Breast epithelium (tissue), 4 donors: ENCODE measurements at regions of chr12 and their contacts with region 1.

Region 1: GRCh38 chr12:11581179-11581755 is 68.2 kb upstream of the ETV6 start:
- DNase-seq: peak; percentile 37 to 57
- H3K4me3 ChIP-seq: no peak overlapping the region
- H3K27ac ChIP-seq: peak overlapping the region in 1 of 2 donors; percentile 78
- H3K4me1 ChIP-seq: peaks cover 0 to 9% of the 10 kb centered on the region in 2 donors
- H3K27me3 ChIP-seq: no peaks in the 10 kb centered on the region
- CTCF ChIP-seq: peak; percentile 63 to 83 (median 72)
- POLR2A ChIP-seq: no peak

Region 2: GRCh38 chr12:11500178-11500860 is 80.9 kb before region 1 on chr12:
- intact Hi-C with region 1: loop called (anchors 2 kb)
- DNase-seq: peak; percentile 65 to 90
- H3K4me3 ChIP-seq: no peak overlapping the region
- H3K27ac ChIP-seq: no peak overlapping the region
- H3K4me1 ChIP-seq: no peaks in the 10 kb centered on the region
- H3K27me3 ChIP-seq: peaks cover 0 to 15% of the 10 kb centered on the region in 2 donors
- CTCF ChIP-seq: no peak
- POLR2A ChIP-seq: no peak

Region 3: DNA sequence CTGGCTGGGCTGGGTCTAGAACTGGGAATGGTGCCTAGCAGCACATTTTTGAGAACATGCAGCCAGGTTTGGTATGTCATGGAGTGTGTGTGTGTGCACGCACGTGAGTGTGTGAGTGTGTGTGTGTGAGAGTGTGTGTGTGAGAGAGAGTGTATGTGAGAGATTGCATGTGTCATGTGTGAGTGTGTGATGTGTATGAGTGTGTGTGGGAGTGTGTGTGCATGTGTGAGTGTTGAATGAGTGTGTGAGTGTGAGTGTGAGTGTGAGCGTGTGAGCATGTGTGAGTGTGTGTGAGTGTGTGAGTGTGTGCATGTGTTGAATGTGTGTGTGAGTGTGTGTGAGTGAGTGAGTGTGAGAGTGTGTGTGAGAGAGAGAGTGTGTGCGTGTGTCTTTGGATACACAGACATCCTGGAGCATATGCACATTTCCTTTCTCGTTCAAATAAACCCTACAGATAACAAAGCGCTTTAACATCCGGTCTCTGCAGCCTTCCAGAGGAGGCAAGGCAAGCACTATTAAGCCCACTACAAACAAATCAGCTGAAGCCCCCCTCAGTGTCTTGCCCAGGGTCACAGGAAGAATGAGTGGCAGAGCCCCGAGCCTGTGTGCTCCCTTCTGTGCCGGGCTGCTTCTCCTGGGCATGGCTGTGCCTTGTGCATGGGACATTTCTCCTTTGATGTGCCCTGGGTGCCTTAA is 40.5 kb before region 1 on chr12:
- intact Hi-C with region 1: no loop called
- DNase-seq: no peak
- H3K4me3 ChIP-seq: no peak overlapping the region
- H3K27ac ChIP-seq: no peak overlapping the region
- H3K4me1 ChIP-seq: no peaks in the 10 kb centered on the region
- H3K27me3 ChIP-seq: no peaks in the 10 kb centered on the region
- CTCF ChIP-seq: no peak
- POLR2A ChIP-seq: no peak

Region 4: DNA sequence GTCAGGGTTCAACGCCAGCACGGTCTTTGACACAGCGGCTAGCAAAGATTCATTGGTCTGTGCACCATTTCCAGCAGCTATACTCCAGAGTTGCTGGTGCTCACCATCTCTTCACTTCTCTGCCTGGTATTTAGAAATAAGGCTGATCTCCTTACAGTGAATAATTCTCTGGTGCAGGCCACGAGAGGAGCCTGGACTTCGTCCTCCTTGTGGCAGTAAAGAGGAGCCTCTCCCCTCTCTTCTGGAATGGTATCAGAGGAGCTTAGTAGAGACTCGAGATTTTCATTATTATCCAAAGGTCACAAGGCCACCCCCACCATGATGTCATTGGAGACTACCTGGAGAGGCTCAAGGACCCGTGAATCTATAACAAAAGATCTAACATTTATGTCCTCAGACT is 458.6 kb after region 1 on chr12:
- intact Hi-C with region 1: loop called (anchors 5 kb)
- DNase-seq: no peak
- H3K4me3 ChIP-seq: no peak overlapping the region
- H3K27ac ChIP-seq: no peak overlapping the region
- H3K4me1 ChIP-seq: no peaks in the 10 kb centered on the region
- H3K27me3 ChIP-seq: no peaks in the 10 kb centered on the region
- CTCF ChIP-seq: no peak
- POLR2A ChIP-seq: no peak